ENCODE measurements at regions of chr13 and their contacts with region 1.

Region 1: DNA sequence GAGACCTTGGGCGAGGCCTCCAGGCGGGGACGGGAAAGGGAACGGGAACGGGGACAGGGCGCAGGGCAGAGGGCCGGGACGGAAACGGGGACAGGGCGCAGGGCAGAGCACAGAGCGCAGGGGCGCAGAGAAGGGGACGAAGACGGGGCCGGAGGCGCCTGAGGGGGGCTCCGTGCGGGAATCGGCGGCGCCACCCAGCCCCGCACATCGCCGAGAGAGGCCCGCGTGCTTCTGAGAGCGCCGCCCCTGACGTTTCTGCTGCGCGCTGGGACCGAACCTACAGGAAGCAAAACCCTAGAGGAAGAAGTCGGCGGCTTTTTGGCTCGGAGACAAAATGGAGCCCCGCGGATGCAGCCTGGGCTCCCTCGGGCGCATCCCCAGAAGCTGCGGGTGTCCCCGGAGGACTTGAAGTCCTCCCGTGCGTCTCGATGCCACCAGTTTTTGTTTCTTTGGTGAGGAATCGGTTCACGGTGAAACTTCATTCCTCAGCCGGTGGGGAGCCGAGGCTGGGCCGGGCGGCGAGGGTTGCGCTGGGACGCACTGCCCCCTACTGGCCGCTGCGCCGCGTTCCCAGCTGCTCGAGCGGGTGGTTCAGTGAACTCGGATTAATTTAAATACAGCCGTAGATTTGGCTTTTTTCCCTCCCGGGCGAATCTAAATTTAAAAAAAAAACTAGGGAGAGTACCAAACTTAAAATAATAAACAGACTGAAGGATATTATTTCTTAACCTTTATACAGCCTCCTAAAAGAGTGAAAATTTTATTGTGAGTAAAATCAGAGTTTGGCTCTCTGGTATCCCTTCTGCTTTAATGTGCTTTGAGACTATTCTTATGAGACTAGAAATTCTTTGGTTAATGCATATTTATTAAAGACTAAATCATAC is 350.0 kb upstream of the ARGLU1 start:
- DNase-seq: peak in 1 of 2 donors; percentile 88
- H3K4me3 ChIP-seq: peak overlapping the region; percentile 69 to 82
- H3K27ac ChIP-seq: peak overlapping the region; percentile 87 to 98
- H3K4me1 ChIP-seq: peaks cover 5 to 18% of the 10 kb centered on the region in 2 donors
- H3K27me3 ChIP-seq: no peaks in the 10 kb centered on the region
- CTCF ChIP-seq: peak; percentile 81 to 97 (median 94)

Region 2: GRCh38 chr13:106567474-106568298 is 350.2 kb before region 1 on chr13 and contains the start of gene ARGLU1:
- intact Hi-C with region 1: loop called (anchors 2 kb)
- DNase-seq: peak; percentile 61 to 96
- H3K4me3 ChIP-seq: peak within 1 kb of the TSS; percentile 83 to 93
- H3K27ac ChIP-seq: peak within 1 kb of the TSS; percentile 92 to 96
- H3K4me1 ChIP-seq: peaks cover 0 to 29% of the 10 kb centered on the region in 2 donors
- H3K27me3 ChIP-seq: no peaks in the 10 kb centered on the region
- CTCF ChIP-seq: no peak
- total RNA-seq, gene ARGLU1: 79.7 TPM

Region 3: GRCh38 chr13:106612688-106613087 is 305.2 kb before region 1 on chr13:
- intact Hi-C with region 1: no loop called
- DNase-seq: no peak
- H3K4me3 ChIP-seq: no peak overlapping the region
- H3K27ac ChIP-seq: no peak overlapping the region
- H3K4me1 ChIP-seq: no peaks in the 10 kb centered on the region
- H3K27me3 ChIP-seq: no peaks in the 10 kb centered on the region
- CTCF ChIP-seq: no peak

Region 4: DNA sequence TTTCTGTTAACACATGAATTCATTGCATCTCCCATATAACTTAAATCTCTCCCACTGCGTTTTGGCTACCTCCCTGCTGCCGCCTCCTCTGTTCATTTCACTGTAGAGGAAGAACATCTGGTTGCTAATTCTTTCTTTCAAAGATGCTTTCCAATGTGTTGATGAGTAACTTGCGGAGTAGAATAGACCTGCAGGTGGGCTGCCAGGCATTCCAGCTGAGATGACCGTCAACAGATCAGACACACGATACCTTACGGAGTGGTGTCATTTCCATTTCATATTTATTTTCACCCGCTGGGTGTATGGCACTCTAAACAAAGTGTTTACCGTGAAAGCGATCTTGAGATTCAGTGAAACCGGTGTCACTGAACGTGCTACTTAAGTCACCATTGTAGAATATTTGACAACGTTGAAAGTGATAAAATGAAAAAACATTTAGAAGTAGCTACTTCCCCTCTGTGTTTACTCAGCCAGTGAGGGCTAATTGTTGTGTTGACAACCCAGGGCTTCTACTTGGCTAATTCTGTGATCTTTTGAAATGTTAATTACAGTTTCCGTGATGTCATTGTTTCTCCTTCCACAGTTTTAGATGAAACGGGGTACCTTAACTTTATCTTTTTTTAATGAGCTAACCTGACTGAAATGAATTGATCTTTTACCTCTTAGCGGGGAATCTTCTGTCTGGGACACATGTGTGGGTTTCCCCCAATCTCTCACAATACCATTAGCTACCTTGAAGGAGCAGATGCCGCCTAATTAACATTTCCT is 121.5 kb before region 1 on chr13:
- intact Hi-C with region 1: loop called (anchors 5 kb)
- DNase-seq: no peak
- H3K4me3 ChIP-seq: no peak overlapping the region
- H3K27ac ChIP-seq: no peak overlapping the region
- H3K4me1 ChIP-seq: no peaks in the 10 kb centered on the region
- H3K27me3 ChIP-seq: no peaks in the 10 kb centered on the region
- CTCF ChIP-seq: no peak

Region 5: DNA sequence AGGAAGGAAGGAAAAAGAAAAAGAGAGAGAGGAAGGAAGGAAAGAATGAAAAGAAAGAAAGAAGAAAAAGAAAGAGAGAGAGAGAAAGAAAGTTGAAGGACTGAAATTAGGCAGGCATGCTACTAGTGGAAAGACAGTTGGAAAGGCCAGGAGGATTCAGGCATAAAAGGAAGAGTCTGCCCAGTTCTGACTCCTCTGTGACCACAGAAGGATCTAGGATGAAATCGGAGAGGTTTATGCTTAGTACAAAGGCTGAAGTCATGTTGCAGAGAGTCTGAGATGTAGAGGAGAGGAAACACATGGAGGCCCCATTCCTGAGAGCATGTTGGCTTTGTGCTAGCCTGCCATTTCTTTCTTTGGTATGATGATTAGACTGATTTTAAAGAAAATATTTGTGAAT is 103.5 kb before region 1 on chr13:
- intact Hi-C with region 1: no loop called
- DNase-seq: no peak
- H3K4me3 ChIP-seq: no peak overlapping the region
- H3K27ac ChIP-seq: no peak overlapping the region
- H3K4me1 ChIP-seq: no peaks in the 10 kb centered on the region
- H3K27me3 ChIP-seq: no peaks in the 10 kb centered on the region
- CTCF ChIP-seq: no peak

Region 6: DNA sequence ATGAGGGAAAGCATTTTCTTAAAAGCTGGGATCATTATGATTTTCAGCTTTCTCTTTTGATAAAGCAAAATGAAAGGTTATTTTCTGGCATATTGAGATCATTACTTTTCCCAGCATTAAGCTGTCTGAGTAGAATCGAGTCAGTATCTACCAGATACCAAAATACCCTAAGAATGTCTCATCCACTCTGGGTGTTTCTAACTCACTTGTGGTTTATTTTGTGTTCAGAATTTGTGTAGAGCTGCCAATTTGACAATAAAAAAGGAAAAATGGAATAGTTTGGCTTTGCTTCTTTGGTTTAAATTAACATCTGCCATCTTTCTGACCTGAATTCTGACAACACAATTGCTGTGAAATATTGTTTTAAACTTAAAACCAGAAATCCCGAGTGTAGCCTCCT is 88.7 kb after region 1 on chr13:
- intact Hi-C with region 1: no loop called
- DNase-seq: no peak
- H3K4me3 ChIP-seq: no peak overlapping the region
- H3K27ac ChIP-seq: no peak overlapping the region
- H3K4me1 ChIP-seq: no peaks in the 10 kb centered on the region
- H3K27me3 ChIP-seq: no peaks in the 10 kb centered on the region
- CTCF ChIP-seq: no peak

Region 7: GRCh38 chr13:107025978-107026377 is 108.1 kb after region 1 on chr13:
- intact Hi-C with region 1: loop called (anchors 1 kb)
- DNase-seq: peak; percentile 78 to 95
- H3K4me3 ChIP-seq: no peak overlapping the region
- H3K27ac ChIP-seq: peak overlapping the region; percentile 74 to 76
- H3K4me1 ChIP-seq: peaks cover 0 to 13% of the 10 kb centered on the region in 2 donors
- H3K27me3 ChIP-seq: no peaks in the 10 kb centered on the region
- CTCF ChIP-seq: no peak

Region 8: DNA sequence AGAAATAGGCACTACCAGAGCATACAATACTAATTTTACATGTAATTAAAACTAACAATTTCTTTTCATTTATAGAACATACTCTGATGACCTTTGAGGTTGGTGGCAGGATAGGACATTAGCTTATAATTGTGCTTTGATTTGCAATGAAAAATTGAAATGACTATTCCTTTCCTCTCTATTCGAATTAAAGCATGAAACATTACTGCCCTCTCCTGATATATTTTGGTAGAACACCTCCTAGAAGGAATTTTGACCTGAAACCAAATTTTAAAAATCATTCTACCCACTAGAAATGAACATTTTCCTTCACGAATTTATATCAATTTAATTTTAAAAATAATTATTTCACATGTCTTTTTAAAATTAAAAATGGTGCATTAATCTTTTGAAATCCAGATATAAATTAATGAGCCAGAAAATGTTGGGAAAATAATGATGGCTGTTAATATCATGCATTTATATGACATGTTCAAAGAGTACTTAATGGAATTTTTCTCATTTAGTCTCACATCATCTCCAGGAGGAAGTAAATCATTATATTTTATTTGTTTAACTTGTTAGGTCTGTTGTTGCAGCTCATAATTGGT is 206.3 kb after region 1 on chr13:
- intact Hi-C with region 1: loop called (anchors 2 kb)
- DNase-seq: no peak
- H3K4me3 ChIP-seq: no peak overlapping the region
- H3K27ac ChIP-seq: no peak overlapping the region
- H3K4me1 ChIP-seq: no peaks in the 10 kb centered on the region
- H3K27me3 ChIP-seq: no peaks in the 10 kb centered on the region
- CTCF ChIP-seq: peak; percentile 52 to 75 (median 64)